ENCODE measurements at regions of chrX and their contacts with region 1.

Region 1: DNA sequence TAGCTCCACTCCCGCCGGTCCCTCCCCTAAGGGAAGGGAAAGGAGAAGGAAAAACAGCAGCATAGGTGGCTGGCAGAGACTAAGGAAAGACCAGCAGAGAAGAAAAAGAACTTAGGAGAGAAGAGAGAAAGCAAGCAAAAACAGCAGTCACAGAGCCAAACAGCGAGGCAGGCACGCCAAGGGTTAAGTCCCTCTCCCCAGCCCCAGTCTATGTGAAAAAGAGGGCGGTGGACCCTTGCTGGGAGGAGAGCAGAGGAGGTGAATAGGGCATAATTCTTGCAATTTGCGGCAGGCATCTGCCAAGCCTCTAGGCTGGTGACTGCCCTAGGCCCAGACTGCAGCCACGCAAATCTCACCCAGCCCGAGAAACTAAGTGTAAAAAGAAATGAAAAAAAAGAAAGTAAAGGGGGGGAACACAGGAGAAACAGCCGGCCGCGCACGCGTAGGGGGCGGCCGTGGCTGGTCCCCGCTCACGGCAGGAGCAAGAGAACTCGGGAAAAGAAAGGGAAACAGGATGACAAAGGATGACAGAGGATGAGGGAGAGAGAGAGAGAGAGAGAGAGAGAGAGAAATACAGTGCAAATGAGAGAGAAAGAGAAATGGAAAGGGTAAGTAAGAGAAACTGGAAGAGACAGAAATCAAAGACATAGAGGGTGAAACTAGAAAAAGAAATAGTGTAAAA is 48.6 kb downstream of the MAGEA9 start:
- DNase-seq: peak; percentile 32
- H3K4me3 Mint-ChIP-seq: peak overlapping the region; percentile 51
- H3K27ac Mint-ChIP-seq: peak overlapping the region; percentile 47
- H3K4me1 Mint-ChIP-seq: peaks cover 19% of the 10 kb centered on the region
- H3K27me3 Mint-ChIP-seq: peaks cover 2% of the 10 kb centered on the region

Region 2: GRCh38 chrX:149003863-149004660 is 826.3 kb before region 1 on chrX:
- CTCF ChIA-PET with region 1: no interaction called
- POLR2A ChIA-PET with region 1: no interaction called
- intact Hi-C with region 1: no loop called
- DNase-seq: no peak
- H3K4me3 Mint-ChIP-seq: no peak overlapping the region
- H3K27ac Mint-ChIP-seq: no peak overlapping the region
- H3K4me1 Mint-ChIP-seq: no peaks in the 10 kb centered on the region
- H3K27me3 Mint-ChIP-seq: no peaks in the 10 kb centered on the region

Region 3: GRCh38 chrX:149531599-149531998 is 298.7 kb before region 1 on chrX:
- CTCF ChIA-PET with region 1: no interaction called
- POLR2A ChIA-PET with region 1: no interaction called
- intact Hi-C with region 1: no loop called
- DNase-seq: no peak
- H3K4me3 Mint-ChIP-seq: no peak overlapping the region
- H3K27ac Mint-ChIP-seq: peak overlapping the region; percentile 80
- H3K4me1 Mint-ChIP-seq: peaks cover 26% of the 10 kb centered on the region
- H3K27me3 Mint-ChIP-seq: no peaks in the 10 kb centered on the region

Region 4: DNA sequence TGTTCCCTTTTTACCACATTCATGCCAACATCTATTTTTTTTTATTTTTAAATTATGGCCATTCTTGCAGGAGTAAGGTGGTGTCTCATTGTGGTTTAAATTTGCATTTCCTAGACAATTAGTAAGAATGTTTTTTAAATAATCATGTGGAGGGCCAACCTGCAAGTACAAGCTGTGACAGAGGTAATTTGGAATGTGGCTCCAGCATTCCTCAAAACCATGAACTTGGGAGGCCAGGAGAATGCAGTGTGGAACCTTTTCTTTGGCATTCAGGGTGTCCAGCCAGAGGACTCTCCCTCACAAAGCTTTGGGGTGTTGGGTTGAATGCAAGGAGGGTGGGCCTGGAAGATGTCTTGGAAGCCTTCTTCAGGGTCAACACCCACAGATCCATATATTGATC is 191.5 kb before region 1 on chrX:
- CTCF ChIA-PET with region 1: no interaction called
- POLR2A ChIA-PET with region 1: no interaction called
- intact Hi-C with region 1: no loop called
- DNase-seq: no peak
- H3K4me3 Mint-ChIP-seq: no peak overlapping the region
- H3K27ac Mint-ChIP-seq: no peak overlapping the region
- H3K4me1 Mint-ChIP-seq: peaks cover 3% of the 10 kb centered on the region
- H3K27me3 Mint-ChIP-seq: no peaks in the 10 kb centered on the region

Region 5: DNA sequence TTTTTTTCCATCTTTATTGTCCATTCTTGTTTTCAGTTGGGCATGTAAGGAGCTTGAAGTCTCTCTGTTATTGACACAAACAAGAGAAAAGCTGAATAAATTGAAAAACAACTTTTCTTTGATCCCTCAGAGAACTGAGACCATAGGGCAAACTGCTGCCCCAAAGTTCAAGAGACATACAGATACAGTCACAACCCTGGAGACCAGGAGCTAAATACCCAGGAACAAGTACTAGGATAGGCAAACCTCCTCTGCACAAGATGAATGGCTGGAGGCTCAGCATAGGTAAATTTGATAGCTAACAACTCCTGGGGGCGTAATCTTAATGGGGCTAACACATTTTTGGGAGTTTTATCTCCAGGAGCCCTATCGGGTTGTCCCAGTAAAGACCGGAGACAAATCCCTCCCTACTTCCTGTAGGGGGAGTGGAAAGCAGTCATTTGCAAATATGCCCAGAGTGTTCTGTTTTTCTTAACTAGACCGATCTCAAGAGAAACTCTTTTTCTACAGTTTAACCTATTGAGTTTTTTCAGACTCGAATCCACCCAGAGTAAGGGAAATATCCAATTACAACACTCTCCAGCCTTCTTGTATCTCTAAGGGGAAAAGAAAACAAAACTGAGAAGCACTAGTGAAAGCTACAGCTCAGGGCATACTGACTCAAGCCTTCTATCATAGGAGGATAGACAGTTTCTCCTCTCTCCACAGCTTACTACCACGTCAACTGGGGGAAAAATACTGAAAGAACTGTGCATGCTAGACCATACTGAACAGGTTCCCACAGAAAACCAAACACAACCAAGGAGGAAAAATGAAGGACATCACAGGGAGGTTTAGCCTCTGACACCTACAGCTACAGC is 73.8 kb after region 1 on chrX:
- CTCF ChIA-PET with region 1: interaction called, 3 read pairs
- POLR2A ChIA-PET with region 1: no interaction called
- intact Hi-C with region 1: loop called (anchors 10 kb)
- DNase-seq: no peak
- H3K4me3 Mint-ChIP-seq: peak overlapping the region; percentile 56
- H3K27ac Mint-ChIP-seq: peak overlapping the region; percentile 28
- H3K4me1 Mint-ChIP-seq: peaks cover 9% of the 10 kb centered on the region
- H3K27me3 Mint-ChIP-seq: peaks cover 2% of the 10 kb centered on the region

Region 6: GRCh38 chrX:150219374-150220185 is 389.2 kb after region 1 on chrX:
- CTCF ChIA-PET with region 1: no interaction called
- POLR2A ChIA-PET with region 1: no interaction called
- intact Hi-C with region 1: no loop called
- DNase-seq: peak; percentile 18
- H3K4me3 Mint-ChIP-seq: no peak overlapping the region
- H3K27ac Mint-ChIP-seq: no peak overlapping the region
- H3K4me1 Mint-ChIP-seq: no peaks in the 10 kb centered on the region
- H3K27me3 Mint-ChIP-seq: no peaks in the 10 kb centered on the region

Measured in activated CD4-positive, alpha-beta memory T cell treated with anti-CD3 and anti-CD28 coated beads for 36 hours (primary cell).